Posterior cingulate gyrus (tissue), 11 donors: ENCODE measurements at regions of chr18 and their contacts with region 1.

Region 1: DNA sequence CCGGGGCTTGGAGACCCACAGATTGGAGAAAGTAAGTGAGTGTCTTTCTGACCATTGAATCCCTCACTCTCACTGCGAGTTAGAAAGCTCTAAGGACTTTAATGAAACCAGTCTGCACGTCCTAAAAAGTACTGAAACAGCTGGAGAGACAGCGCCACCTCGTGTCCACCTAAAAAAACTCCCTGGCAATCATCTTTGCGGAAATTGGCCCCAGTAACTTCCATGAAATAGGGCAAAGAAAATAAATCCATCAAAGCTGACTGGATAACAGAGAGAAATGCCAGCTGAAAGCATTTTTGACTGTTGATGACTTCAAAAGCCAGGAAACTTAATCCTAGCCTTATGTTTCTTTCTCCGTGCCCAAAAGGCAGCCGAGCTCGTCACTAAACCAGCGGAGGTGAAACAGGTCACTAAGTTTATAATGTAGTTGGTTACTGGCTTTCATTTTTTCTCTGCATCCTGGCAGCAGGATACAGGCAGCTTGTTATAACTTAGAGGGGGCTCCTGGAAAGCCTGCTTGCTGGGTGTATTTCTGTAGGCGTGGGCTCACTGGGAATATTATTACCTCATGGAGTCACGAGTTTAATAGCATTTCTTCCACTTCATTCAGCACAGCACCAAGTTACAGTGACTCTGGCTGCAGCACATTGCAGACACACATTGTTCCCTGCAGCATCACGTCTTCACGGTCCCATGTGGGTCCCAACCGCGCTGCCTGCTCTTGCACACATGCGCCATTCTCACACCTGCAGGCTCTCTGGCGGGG is 266.5 kb downstream of the HRH4 start:
- DNase-seq: peak; percentile 49 to 94 (median 76)

Region 2: DNA sequence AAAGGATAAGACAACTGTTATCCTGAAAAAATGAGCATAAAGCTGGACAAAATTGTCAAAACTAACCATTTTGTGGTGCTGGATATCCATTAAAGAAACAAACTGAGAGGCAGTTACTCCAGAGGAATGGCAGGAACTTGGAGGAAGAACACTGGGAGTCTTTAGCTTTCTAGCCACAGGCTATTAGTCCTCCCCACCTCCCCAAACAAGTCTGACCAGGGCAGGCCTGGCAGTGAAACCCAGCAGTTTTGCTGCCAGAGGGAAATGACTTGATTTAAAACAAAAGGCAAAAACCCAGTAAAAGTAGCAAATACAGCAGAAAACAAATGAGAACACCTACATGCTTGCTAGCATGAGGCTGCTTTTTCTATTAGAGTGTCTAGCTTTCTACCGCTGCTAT is 364.2 kb before region 1 on chr18:
- intact Hi-C with region 1: loop called (anchors 5 kb)
- DNase-seq: no peak

Region 3: DNA sequence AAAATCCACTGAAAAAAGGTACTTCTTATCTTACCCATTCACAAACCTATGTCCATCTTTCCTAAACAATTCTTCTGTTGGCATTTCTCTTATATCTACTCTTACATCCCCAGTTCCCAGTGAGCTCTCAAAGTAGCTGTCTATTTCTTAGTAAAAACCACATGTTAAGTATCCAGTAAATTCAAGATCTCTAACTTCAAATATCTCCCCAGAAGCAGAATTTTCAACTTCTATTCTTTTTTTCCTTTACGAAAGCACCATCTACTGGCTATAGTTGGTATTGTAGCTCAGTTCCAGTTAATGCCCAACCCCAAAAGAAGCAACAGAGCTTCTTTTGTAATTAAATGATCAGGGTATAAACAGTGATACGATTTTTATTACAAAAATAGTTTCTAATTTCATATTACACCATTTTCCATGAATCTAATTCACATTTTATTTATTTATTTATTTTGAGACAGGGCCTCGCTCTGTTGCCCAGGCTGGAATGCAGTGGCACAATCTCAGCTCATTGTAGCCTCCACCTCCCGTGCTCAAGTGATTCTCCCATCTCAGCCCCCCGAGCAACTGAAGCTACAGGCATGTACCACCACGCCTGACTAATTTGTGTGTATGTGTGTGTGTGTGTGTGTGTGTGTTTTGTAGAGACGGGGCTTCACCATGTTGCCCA is 238.0 kb before region 1 on chr18:
- intact Hi-C with region 1: loop called (anchors 2 kb)
- DNase-seq: no peak

Region 4: GRCh38 chr18:24543805-24544498 is 183.0 kb before region 1 on chr18:
- intact Hi-C with region 1: loop called (anchors 1 kb)
- DNase-seq: no peak

Region 5: GRCh38 chr18:24560511-24560981 is 166.4 kb before region 1 on chr18:
- intact Hi-C with region 1: no loop called
- DNase-seq: no peak

Region 6: DNA sequence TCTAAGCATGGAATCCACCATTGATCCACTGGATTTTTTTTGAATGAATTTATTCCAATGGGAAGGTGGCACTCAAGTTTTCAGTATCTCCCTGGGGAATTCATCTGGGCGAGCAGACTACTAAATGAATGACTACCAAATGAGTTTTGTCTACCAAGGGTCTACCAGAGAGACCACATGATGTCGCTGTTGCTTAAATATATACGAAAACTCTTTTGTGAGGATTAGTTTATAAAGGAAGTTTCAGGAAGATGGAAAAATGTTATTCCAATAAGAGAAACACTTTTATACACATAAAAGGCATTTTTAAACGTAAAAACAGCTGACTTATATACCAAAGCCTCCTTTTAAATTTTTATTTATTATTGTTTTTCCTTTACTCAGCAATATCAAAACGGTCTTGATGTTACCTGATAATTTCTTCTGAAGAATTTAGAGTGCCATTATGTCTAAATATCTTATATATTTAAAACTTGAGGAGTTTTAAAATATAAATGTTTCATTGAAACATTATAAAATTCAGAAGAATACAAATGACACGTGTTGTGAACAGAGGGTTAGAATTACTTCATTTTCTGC is 126.7 kb before region 1 on chr18:
- intact Hi-C with region 1: loop called (anchors 1 kb)
- DNase-seq: no peak

Region 7: GRCh38 chr18:24763765-24764513 is 37.0 kb after region 1 on chr18:
- intact Hi-C with region 1: no loop called
- DNase-seq: peak in 2 of 10 donors; percentile 8 to 17